WTC11 (cell line): ENCODE measurements at regions of chr14 and their contacts with region 1.

Region 1: GRCh38 chr14:21723431-21724045 is 49.9 kb upstream of the OR4E1 start:
- DNase-seq: peak; percentile 84
- ATAC-seq: peak; percentile 100
- H3K4me3 Mint-ChIP-seq: no peak overlapping the region
- H3K27ac Mint-ChIP-seq: no peak overlapping the region
- H3K4me1 Mint-ChIP-seq: peaks cover 3% of the 10 kb centered on the region
- H3K27me3 Mint-ChIP-seq: peaks cover 14% of the 10 kb centered on the region
- CTCF ChIP-seq: peak; percentile 61

Region 2: DNA sequence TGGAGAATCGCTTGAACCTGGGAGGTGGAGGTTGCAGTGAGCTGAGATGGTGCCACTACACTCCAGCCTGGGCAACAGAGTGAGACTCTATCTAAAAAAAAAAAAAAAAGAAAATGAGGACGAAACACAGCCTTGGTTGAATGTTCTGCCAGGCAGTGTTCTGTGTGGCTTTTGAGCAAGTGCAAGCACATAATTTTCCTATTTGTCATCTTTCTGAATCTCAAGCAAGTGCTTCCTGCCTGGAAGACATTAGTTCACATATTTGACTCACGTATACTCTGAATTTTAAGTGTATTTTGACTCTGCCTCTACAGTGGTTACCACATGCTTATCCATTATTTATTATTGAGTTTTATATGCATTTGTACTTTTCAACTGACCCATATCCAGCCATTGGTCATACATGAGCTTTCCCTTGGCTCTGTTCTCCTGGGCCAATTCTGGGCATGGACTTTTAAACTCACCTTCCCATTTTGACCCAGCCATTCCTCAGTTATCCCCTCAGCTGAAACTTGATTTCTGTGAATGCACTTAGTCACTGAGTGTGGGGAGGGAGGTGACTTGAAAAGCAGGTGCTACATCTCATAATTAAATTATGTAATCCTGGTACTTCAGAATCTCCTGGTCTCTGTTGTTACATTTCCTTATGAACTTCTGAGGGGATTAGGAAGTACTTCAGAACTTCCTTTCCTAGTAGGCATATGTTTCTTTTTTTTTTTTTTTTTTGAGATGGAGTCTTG is 96.9 kb before region 1 on chr14:
- CTCF ChIA-PET with region 1: no interaction called
- POLR2A ChIA-PET with region 1: no interaction called
- DNase-seq: no peak
- ATAC-seq: no peak
- H3K4me3 Mint-ChIP-seq: no peak overlapping the region
- H3K27ac Mint-ChIP-seq: no peak overlapping the region
- H3K4me1 Mint-ChIP-seq: peaks cover 8% of the 10 kb centered on the region
- H3K27me3 Mint-ChIP-seq: no peaks in the 10 kb centered on the region
- CTCF ChIP-seq: no peak

Region 3: GRCh38 chr14:21711360-21711961 is 12.1 kb before region 1 on chr14:
- CTCF ChIA-PET with region 1: interaction called, 74 read pairs
- POLR2A ChIA-PET with region 1: no interaction called
- DNase-seq: no peak
- ATAC-seq: peak; percentile 59; the same call in 1 of the 2 replicates
- H3K4me3 Mint-ChIP-seq: no peak overlapping the region
- H3K27ac Mint-ChIP-seq: no peak overlapping the region
- H3K4me1 Mint-ChIP-seq: no peaks in the 10 kb centered on the region
- H3K27me3 Mint-ChIP-seq: peaks cover 16% of the 10 kb centered on the region
- CTCF ChIP-seq: peak; percentile 64

Region 4: GRCh38 chr14:21748869-21749303 is 25.3 kb after region 1 on chr14:
- CTCF ChIA-PET with region 1: interaction called, 54 read pairs
- POLR2A ChIA-PET with region 1: no interaction called
- DNase-seq: peak; percentile 69
- ATAC-seq: peak; percentile 94
- H3K4me3 Mint-ChIP-seq: no peak overlapping the region
- H3K27ac Mint-ChIP-seq: no peak overlapping the region
- H3K4me1 Mint-ChIP-seq: no peaks in the 10 kb centered on the region
- H3K27me3 Mint-ChIP-seq: no peaks in the 10 kb centered on the region; the same call in 1 of the 2 replicates
- CTCF ChIP-seq: 0 out of 2 replicates have a peak, but pooled peaks have one; percentile 48

Region 5: GRCh38 chr14:21802441-21802840 is 78.9 kb after region 1 on chr14:
- CTCF ChIA-PET with region 1: interaction called, 13 read pairs
- POLR2A ChIA-PET with region 1: no interaction called
- DNase-seq: no peak
- ATAC-seq: no peak
- H3K4me3 Mint-ChIP-seq: no peak overlapping the region
- H3K27ac Mint-ChIP-seq: no peak overlapping the region
- H3K4me1 Mint-ChIP-seq: peaks cover 6% of the 10 kb centered on the region
- H3K27me3 Mint-ChIP-seq: peaks cover 28% of the 10 kb centered on the region
- CTCF ChIP-seq: no peak

Region 6: DNA sequence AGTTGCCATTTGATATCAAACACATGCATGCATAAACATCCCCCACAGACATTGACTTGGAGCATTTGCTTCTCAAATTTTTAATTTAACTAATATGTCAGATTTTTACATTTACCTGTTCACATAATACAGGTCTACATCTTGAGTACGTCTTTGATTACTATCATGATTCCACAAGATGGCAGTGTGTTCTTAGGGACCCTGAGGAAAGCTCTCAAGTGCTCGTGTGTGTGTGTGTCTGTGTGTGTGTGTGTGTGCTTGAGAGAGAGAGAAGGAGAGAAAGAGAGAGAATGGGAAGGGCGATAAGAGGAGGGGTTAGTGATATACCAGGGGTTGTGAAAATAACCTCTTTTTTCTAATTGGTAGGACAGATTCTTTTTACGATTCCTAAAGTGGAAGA is 117.2 kb after region 1 on chr14:
- CTCF ChIA-PET with region 1: interaction called, 11 read pairs
- POLR2A ChIA-PET with region 1: no interaction called
- DNase-seq: no peak
- ATAC-seq: peak; percentile 65
- H3K4me3 Mint-ChIP-seq: no peak overlapping the region
- H3K27ac Mint-ChIP-seq: no peak overlapping the region
- H3K4me1 Mint-ChIP-seq: no peaks in the 10 kb centered on the region
- H3K27me3 Mint-ChIP-seq: peaks cover 32% of the 10 kb centered on the region
- CTCF ChIP-seq: no peak

Region 7: GRCh38 chr14:21894003-21894897 is 170.7 kb after region 1 on chr14:
- CTCF ChIA-PET with region 1: no interaction called
- POLR2A ChIA-PET with region 1: no interaction called
- DNase-seq: peak; percentile 62
- ATAC-seq: peak; percentile 98
- H3K4me3 Mint-ChIP-seq: no peak overlapping the region
- H3K27ac Mint-ChIP-seq: no peak overlapping the region
- H3K4me1 Mint-ChIP-seq: no peaks in the 10 kb centered on the region
- H3K27me3 Mint-ChIP-seq: no peaks in the 10 kb centered on the region; the same call in 1 of the 2 replicates
- CTCF ChIP-seq: peak; percentile 27; the same call in 1 of the 2 replicates